ENCODE measurements at regions of chr5 and their contacts with region 1.

Region 1: DNA sequence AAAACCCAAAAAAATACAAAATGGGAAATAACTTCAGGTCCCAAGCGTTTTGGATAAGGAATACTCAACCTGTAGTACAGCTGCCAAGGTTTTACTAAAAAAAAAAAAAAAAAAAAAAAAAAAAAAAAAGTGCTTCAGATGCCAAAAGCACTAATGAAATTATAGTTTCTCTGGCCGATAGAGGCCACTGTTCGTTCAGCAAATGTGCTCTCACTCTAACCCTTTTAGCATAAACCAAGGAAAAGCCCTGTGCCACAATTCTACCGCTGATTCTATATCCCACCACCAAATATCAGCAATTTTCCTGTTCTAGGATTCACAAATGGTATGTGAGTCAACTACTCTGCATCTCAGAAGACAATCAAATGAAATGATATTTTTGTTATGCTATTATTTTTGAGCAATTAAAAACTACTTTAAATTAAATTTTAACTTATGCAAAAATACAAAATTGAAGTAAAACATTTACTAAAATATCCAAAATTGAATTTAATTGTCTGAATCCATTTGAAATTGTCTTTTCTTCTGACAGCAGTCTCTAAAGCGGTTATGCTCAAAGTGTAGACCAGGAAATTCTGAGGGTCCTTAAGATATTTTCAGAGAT is 79.8 kb downstream of the RICTOR start:
- DNase-seq: peak in 9 of 14 experiments; percentile 2 to 72 (median 26)
- ATAC-seq: peak; percentile 75
- H3K4me3 ChIP-seq: no peak overlapping the region
- H3K4me3 Mint-ChIP-seq: no peak overlapping the region
- H3K27ac ChIP-seq: no peak overlapping the region
- H3K27ac Mint-ChIP-seq: no peak overlapping the region
- H3K4me1 ChIP-seq: no peaks in the 10 kb centered on the region
- H3K4me1 Mint-ChIP-seq: peaks cover 45% of the 10 kb centered on the region
- H3K27me3 ChIP-seq: no peaks in the 10 kb centered on the region
- H3K27me3 Mint-ChIP-seq: no peaks in the 10 kb centered on the region
- CTCF ChIP-seq: peak; percentile 53

Region 2: GRCh38 chr5:38948501-38948900 is 45.9 kb before region 1 on chr5:
- CTCF ChIA-PET with region 1: no interaction called
- POLR2A ChIA-PET with region 1: no interaction called
- intact Hi-C with region 1: no loop called
- DNase-seq: no peak
- ATAC-seq: no peak
- H3K4me3 ChIP-seq: no peak overlapping the region
- H3K4me3 Mint-ChIP-seq: no peak overlapping the region
- H3K27ac ChIP-seq: no peak overlapping the region
- H3K27ac Mint-ChIP-seq: no peak overlapping the region
- H3K4me1 ChIP-seq: no peaks in the 10 kb centered on the region
- H3K4me1 Mint-ChIP-seq: no peaks in the 10 kb centered on the region
- H3K27me3 ChIP-seq: no peaks in the 10 kb centered on the region
- H3K27me3 Mint-ChIP-seq: no peaks in the 10 kb centered on the region
- CTCF ChIP-seq: no peak

Region 3: DNA sequence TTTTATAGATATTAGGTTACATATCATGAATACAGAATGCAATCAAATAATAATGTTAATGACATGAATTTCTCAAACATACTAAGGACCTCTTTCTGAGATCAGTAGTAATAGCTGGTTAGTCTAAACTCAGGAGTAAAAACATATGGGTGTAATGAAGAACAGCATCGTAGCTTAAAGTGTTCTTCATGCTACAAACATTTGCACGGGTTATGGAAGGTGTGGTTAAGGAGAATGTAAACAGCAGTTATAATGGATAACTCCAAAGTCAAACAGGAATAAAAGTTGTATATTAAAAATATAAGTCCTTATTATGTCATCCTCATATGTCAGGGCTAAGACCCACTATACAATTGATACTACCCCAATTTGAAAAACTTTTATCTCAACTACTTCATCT is 32.7 kb before region 1 on chr5:
- CTCF ChIA-PET with region 1: no interaction called
- POLR2A ChIA-PET with region 1: no interaction called
- intact Hi-C with region 1: loop called in 1 of 2 experiments (anchors 1 kb)
- DNase-seq: no peak
- ATAC-seq: no peak
- H3K4me3 ChIP-seq: no peak overlapping the region
- H3K4me3 Mint-ChIP-seq: no peak overlapping the region
- H3K27ac ChIP-seq: no peak overlapping the region
- H3K27ac Mint-ChIP-seq: no peak overlapping the region
- H3K4me1 ChIP-seq: no peaks in the 10 kb centered on the region
- H3K4me1 Mint-ChIP-seq: no peaks in the 10 kb centered on the region
- H3K27me3 ChIP-seq: no peaks in the 10 kb centered on the region
- H3K27me3 Mint-ChIP-seq: no peaks in the 10 kb centered on the region
- CTCF ChIP-seq: no peak

Region 4: DNA sequence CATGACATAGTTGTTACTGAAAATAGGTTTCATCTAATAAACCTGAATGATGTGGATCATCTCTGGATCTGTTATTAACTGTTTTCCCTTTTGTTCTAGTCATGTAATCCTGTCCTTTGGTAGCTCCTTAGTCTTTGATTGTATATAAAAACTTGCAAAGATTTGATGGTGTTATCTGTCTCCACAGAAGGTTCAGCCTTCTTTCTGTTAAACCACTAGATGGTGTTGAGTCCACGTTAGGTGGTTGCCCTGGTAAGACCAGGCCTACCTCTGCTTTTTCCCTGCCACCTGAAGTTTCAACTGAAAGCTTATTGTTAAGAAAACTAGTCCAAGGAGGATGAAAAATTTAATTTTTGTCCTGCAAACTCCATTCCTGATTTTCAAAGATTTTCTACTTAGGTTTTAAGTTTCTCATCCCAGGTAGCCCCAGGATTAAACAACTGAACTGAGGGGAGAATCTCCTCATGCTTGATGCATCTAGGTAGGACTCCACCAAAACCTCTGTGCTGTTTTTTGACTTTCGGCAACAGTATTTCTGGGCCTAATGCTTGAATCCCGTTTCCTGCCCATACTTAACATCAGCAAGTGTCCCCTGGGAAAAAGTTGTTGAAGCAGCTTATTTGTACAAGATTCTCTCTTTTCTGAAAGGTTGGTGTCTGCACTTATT is 11.3 kb after region 1 on chr5:
- CTCF ChIA-PET with region 1: no interaction called
- POLR2A ChIA-PET with region 1: no interaction called
- intact Hi-C with region 1: no loop called
- DNase-seq: peak in 4 of 14 experiments; percentile 20 to 59 (median 48)
- ATAC-seq: peak; percentile 86
- H3K4me3 ChIP-seq: no peak overlapping the region
- H3K4me3 Mint-ChIP-seq: no peak overlapping the region
- H3K27ac ChIP-seq: no peak overlapping the region
- H3K27ac Mint-ChIP-seq: peak overlapping the region; percentile 64
- H3K4me1 ChIP-seq: peaks cover 4% of the 10 kb centered on the region
- H3K4me1 Mint-ChIP-seq: peaks cover 61% of the 10 kb centered on the region
- H3K27me3 ChIP-seq: no peaks in the 10 kb centered on the region
- H3K27me3 Mint-ChIP-seq: no peaks in the 10 kb centered on the region
- CTCF ChIP-seq: peak; percentile 64